ENCODE measurements at regions of chr13 and their contacts with region 1.

Region 1: DNA sequence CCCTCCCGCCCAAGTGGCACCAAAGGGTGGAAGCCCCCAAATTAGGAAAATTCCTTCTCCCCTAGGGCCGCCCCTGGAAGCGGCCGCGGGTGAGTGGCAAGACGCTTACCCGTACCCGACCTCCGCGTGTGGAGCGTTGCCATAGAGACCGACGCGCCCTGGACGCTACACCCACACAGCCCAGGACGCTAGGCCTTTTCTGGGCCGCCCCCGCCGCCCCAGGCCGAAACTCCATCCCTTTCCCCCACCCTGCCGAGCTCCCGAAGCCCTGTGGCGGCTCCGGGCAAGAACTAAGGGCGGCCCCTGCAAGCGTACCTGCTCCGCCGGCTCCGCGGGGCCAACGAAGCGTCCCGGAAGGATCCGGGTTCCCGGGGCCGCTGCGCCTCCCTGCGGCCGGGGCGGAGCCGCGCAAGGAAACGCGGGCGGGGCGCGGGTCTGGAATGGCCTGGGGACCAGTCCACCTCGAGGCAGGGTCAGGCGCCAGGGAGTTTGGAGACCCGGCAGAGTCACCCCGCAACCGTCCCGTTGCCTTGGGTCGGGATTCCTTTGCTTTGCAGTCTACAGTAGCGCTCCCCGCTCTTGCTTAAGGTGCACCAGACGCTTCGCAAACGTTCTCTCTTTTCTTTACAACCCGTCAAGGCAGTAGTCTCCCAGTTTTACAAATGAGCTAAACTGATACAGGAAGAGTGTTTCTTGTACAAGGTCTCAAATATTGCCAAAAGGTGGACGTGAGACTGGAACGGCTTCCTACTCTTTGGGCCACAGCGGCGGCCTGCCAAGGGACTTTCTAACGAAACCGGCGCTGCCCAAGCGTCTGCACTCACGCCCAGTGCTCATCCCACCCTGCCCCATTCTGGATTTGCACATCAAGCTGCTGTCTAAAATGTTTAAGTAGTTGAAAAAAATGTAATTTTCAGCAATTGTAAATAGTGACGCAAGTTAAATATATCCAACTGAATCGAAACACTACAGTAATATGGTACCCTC is at the start of gene NEK5:
- DNase-seq: peak; percentile 69 to 80 (median 79)
- ATAC-seq: peak; percentile 91 to 93 (median 92)
- H3K4me3 ChIP-seq: peak within 1 kb of the TSS; percentile 74 to 77 (median 75)
- H3K27ac ChIP-seq: no peak within 1 kb of the TSS
- H3K4me1 ChIP-seq: peaks cover 0 to 12% (median 0%) of the 10 kb centered on the region in 4 donors
- H3K27me3 ChIP-seq: no peaks in the 10 kb centered on the region
- CTCF ChIP-seq: peak; percentile 71 to 90 (median 78)
- POLR2A ChIP-seq: no peak
- total RNA-seq, gene NEK5: 0.06 TPM in 1 of 6 experiments, not detected in the others

Region 2: DNA sequence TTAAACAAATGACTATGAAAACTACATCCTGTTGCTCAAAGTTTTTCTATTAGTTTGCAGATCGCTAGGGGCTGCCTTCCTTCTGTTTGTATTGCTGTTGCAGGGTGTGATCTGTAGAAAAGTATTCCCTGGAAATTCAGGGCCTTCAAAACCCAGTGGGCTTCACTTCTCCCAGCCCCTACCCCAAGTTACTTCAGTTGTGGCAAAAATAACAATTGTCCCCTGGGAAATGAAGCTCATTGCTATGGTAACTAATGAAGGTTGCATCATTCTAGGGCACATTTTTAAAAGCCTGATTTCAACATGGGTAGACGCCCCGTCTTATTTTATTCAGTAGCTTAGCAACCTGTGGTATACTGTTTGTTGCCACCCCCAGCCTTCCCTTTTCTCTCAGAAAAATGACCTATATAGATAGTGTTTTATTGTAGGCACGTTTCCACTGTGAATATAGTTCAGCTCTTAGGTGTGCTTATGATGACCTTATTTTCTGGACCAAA is 483.8 kb before region 1 on chr13:
- intact Hi-C with region 1: no loop called
- DNase-seq: no peak
- ATAC-seq: peak; percentile 28 to 80 (median 58)
- H3K4me3 ChIP-seq: no peak overlapping the region
- H3K27ac ChIP-seq: no peak overlapping the region
- H3K4me1 ChIP-seq: peaks cover 0 to 23% (median 1%) of the 10 kb centered on the region in 4 donors
- H3K27me3 ChIP-seq: no peaks in the 10 kb centered on the region
- CTCF ChIP-seq: no peak
- POLR2A ChIP-seq: no peak

Region 3: GRCh38 chr13:51895906-51896888 is 232.8 kb before region 1 on chr13:
- intact Hi-C with region 1: loop called in 1 of 2 experiments (anchors 10 kb)
- DNase-seq: peak in 2 of 3 donors; percentile 47 to 62
- ATAC-seq: peak; percentile 86 to 94 (median 92)
- H3K4me3 ChIP-seq: no peak overlapping the region
- H3K27ac ChIP-seq: no peak overlapping the region
- H3K4me1 ChIP-seq: no peaks in the 10 kb centered on the region
- H3K27me3 ChIP-seq: no peaks in the 10 kb centered on the region
- CTCF ChIP-seq: peak; percentile 51 to 73 (median 71)
- POLR2A ChIP-seq: no peak

Region 4: GRCh38 chr13:52001120-52001731 is 127.8 kb before region 1 on chr13:
- intact Hi-C with region 1: loop called (anchors 5 to 10 kb)
- DNase-seq: no peak
- ATAC-seq: peak; percentile 16 to 54 (median 37)
- H3K4me3 ChIP-seq: no peak overlapping the region
- H3K27ac ChIP-seq: no peak overlapping the region
- H3K4me1 ChIP-seq: peaks cover 0 to 43% (median 16%) of the 10 kb centered on the region in 4 donors
- H3K27me3 ChIP-seq: no peaks in the 10 kb centered on the region
- CTCF ChIP-seq: peak; percentile 63 to 70 (median 64)
- POLR2A ChIP-seq: no peak

Region 5: DNA sequence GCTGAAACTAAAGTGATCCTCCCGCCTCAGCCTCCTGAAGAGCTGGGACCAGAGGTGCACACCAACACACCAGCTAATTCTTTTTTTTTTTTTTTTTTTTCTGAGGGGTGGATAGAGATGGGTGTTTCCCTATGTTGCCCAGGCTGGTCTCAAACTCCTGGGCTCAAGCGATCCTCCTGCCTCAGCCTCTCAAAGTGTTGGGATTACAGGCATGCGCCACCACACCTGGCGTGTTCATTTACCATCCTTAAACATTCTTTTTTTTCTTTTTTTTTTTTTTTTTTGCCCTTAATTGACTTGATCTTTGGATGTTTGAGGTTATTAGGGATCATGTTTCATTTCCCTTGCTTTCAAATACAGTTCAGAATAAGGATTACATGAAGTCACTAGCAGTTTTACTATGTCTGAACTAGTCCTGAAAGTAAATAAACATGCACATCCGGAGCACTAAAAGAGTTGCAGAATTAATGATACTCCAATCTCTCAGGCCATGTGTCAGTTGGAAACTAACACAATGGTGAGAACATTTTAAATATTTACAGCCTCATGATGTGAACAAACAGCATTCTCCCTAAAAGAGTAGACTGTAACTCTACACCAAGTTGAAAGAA is 94.3 kb before region 1 on chr13:
- intact Hi-C with region 1: no loop called
- DNase-seq: no peak
- ATAC-seq: no peak
- H3K4me3 ChIP-seq: no peak overlapping the region
- H3K27ac ChIP-seq: no peak overlapping the region
- H3K4me1 ChIP-seq: no peaks in the 10 kb centered on the region
- H3K27me3 ChIP-seq: no peaks in the 10 kb centered on the region
- CTCF ChIP-seq: no peak
- POLR2A ChIP-seq: no peak